Calu3 (cell line): ENCODE measurements at regions of chr2 and their contacts with region 1.

Region 1: DNA sequence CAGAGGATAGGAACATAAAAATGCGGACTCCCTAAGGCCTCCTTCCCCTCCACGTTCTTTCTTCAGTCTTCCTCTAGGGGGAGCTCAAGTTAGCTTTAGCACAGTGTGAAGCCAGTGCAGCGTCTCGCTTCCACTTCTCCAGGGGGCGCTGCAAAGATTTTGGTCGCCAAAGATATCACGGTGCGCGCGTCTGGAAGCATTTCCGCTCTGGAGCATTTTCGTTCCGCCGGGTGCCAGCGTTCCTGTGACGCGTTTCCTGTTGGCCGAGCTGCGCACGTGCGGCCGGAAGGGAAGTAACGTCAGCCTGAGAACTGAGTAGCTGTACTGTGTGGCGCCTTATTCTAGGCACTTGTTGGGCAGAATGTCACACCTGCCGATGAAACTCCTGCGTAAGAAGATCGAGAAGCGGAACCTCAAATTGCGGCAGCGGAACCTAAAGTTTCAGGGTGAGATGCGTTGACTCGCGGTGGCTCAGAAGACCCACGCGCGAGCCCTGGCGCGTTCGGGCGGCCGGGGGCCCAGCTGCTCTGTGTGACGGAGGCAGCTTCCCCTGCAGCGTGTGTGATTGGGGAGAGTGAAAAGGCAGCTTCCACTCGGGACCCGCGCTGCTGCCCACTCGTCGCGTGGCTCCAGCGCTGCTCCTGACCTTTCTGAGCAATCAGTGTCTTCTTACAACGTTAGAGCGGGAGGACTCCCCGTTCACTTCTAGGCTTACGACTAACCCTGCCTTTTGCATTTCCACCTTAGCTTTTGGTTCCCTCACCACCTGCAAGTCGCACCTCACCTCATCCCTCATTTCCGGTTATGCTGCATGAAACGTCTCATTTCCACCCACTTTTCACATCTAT is at the start of gene DDX18:
- DNase-seq: peak; percentile 96
- H3K4me3 Mint-ChIP-seq: peak within 1 kb of the TSS; percentile 90
- H3K27ac Mint-ChIP-seq: peak within 1 kb of the TSS; percentile 89
- H3K4me1 Mint-ChIP-seq: peaks cover 7% of the 10 kb centered on the region
- H3K27me3 Mint-ChIP-seq: no peaks in the 10 kb centered on the region
- CTCF ChIP-seq: peak; percentile 98
- total RNA-seq, gene DDX18: 106 and 114 TPM in 2 replicates

Region 2: GRCh38 chr2:117101613-117102012 is 713.0 kb before region 1 on chr2:
- CTCF ChIA-PET with region 1: no interaction called
- intact Hi-C with region 1: no loop called
- DNase-seq: no peak
- H3K4me3 Mint-ChIP-seq: no peak overlapping the region
- H3K27ac Mint-ChIP-seq: no peak overlapping the region
- H3K4me1 Mint-ChIP-seq: no peaks in the 10 kb centered on the region
- H3K27me3 Mint-ChIP-seq: no peaks in the 10 kb centered on the region
- CTCF ChIP-seq: no peak

Region 3: DNA sequence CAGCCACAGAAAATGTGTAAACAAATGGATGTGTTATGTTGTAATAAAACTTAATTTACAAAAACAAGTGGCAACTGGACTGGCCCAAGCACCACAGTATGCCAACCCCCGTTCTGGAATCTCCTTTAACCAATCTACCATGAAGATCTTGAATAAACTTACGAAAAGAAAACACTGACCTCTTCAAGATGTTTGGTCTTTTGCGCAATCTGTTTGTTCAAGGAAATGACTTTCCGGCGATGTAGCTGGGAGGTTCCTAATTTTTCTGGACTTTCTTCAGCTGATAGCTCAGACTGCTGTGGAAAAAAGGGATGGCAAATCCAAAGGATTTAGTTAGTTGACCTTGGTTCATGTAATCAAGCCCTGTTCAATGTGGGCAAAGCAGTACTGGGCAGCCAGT is 143.5 kb after region 1 on chr2:
- CTCF ChIA-PET with region 1: no interaction called
- intact Hi-C with region 1: loop called (anchors 10 kb)
- DNase-seq: peak; percentile 6
- H3K4me3 Mint-ChIP-seq: no peak overlapping the region
- H3K27ac Mint-ChIP-seq: peak overlapping the region; percentile 74
- H3K4me1 Mint-ChIP-seq: peaks cover 21% of the 10 kb centered on the region
- H3K27me3 Mint-ChIP-seq: no peaks in the 10 kb centered on the region
- CTCF ChIP-seq: no peak

Region 4: GRCh38 chr2:118003396-118003824 is 188.8 kb after region 1 on chr2:
- CTCF ChIA-PET with region 1: interaction called, 18 read pairs
- intact Hi-C with region 1: loop called (anchors 10 kb)
- DNase-seq: peak; percentile 56
- H3K4me3 Mint-ChIP-seq: no peak overlapping the region
- H3K27ac Mint-ChIP-seq: no peak overlapping the region
- H3K4me1 Mint-ChIP-seq: no peaks in the 10 kb centered on the region
- H3K27me3 Mint-ChIP-seq: no peaks in the 10 kb centered on the region
- CTCF ChIP-seq: peak; percentile 60